Activated naive CD4-positive, alpha-beta T cell treated with anti-CD3 and anti-CD28 coated beads for 36 hours (primary cell): ENCODE measurements at regions of chr19 and their contacts with region 1.

Region 1: DNA sequence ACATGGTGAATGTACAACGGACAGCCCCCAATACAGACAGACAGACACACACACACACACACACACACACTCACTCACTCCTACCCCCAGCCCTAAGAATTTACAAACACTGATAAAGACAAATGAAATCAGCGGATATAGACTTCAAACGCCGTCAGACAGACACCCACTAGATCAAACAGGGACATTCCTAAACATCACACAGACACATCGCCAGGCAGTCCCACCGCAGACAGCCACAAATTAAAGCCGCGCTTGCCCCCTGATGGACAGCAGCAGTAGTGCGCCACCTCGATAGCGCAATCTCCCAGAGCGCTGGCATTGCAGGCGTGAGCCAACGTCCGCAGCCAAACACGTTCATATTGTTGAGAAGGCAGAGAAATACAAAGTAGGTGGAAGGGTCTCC is 24.7 kb upstream of the ADGRE1 start:
- DNase-seq: peak; percentile 98
- H3K4me3 Mint-ChIP-seq: peak overlapping the region; percentile 73
- H3K27ac Mint-ChIP-seq: peak overlapping the region; percentile 80
- H3K4me1 Mint-ChIP-seq: peaks cover 16% of the 10 kb centered on the region
- H3K27me3 Mint-ChIP-seq: no peaks in the 10 kb centered on the region

Region 2: DNA sequence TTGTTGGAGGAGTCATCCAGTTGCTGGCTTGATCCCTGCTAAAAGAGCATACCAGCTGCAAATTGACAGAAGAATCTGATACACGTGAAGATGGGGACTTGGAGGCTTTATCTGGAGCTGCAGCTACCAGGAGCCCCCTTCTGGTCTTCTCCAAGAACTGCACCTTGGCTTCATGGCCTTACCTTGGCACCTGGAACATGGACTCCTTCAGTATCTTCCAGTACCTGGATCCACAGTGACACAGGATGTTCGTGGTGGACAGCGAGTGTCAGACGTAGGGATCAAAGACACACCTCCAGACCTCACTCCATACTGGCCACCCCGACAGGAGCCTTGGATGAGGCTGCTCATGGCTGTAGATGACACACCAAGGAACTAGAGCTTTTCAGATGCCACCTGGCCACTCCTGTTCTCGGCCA is 737.1 kb before region 1 on chr19:
- CTCF ChIA-PET with region 1: no interaction called
- intact Hi-C with region 1: loop called (anchors 2 kb)
- DNase-seq: peak; percentile 76
- H3K4me3 Mint-ChIP-seq: no peak overlapping the region
- H3K27ac Mint-ChIP-seq: no peak overlapping the region
- H3K4me1 Mint-ChIP-seq: no peaks in the 10 kb centered on the region
- H3K27me3 Mint-ChIP-seq: no peaks in the 10 kb centered on the region

Region 3: DNA sequence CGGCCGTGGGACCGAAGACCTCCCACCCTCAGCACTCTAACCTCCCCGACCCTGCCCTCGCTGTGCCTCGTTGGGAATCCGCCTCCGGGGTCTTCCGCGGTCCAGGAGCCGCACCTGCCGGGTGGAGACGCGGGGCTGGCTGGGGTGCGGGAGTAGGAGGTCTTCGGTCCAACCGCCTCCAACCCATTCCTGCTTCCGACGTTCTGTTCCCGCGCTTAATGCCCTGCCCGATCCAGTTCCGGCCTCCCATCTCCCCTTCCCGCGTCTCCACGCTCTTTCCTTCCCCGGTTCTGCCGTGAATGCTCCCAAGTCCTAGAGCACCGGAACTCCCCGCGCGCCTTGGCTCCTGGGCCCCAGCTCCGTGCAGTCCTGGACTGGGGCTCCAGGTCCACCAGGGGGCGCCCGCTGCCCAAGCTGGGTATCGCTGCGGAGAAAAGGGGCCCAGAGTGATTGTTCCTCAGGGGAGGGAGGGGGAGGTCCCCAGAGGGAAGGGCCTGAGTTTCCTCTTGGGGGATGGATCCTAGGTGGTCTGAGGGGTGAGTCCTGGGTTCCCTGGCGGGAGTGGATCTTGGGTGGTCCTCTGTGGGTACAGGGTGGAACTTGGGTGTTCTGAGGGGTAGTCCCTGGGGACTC is 345.9 kb before region 1 on chr19:
- CTCF ChIA-PET with region 1: interaction called, 17 read pairs
- intact Hi-C with region 1: loop called (anchors 1 kb)
- DNase-seq: peak; percentile 96
- H3K4me3 Mint-ChIP-seq: peak overlapping the region; percentile 89
- H3K27ac Mint-ChIP-seq: peak overlapping the region; percentile 80
- H3K4me1 Mint-ChIP-seq: peaks cover 27% of the 10 kb centered on the region
- H3K27me3 Mint-ChIP-seq: no peaks in the 10 kb centered on the region

Region 4: DNA sequence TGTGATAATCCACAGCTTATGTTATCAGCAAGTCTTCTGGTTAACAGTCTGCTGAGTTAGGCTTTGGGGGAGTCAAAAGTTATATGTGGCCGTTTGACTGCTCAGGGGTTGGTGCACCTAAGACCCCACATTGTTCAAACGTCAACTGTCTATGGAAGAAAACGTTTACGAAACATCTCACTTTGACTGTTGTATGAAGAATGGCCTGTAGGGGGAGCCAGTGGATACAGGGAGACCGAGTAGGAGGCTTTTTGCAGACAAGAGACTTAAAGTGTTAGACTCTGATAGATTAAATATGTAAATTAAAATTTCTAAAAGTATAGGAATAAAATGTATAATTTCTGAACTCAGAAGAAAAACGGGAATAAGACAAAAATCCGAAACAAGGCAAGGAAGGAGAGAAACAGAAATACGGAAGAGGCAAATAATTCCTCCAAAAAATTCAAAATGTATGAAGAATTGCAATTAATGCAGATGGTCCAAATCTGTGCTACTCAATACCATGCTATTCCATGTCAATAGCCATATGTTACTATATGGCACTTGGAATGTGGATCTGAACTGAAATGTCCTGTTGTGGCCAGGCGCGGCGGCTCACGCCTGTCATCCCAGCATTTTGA is 230.6 kb before region 1 on chr19:
- CTCF ChIA-PET with region 1: interaction called, 29 read pairs
- intact Hi-C with region 1: loop called (anchors 1 kb)
- DNase-seq: peak; percentile 94
- H3K4me3 Mint-ChIP-seq: no peak overlapping the region
- H3K27ac Mint-ChIP-seq: no peak overlapping the region
- H3K4me1 Mint-ChIP-seq: peaks cover 24% of the 10 kb centered on the region
- H3K27me3 Mint-ChIP-seq: peaks cover 4% of the 10 kb centered on the region

Region 5: DNA sequence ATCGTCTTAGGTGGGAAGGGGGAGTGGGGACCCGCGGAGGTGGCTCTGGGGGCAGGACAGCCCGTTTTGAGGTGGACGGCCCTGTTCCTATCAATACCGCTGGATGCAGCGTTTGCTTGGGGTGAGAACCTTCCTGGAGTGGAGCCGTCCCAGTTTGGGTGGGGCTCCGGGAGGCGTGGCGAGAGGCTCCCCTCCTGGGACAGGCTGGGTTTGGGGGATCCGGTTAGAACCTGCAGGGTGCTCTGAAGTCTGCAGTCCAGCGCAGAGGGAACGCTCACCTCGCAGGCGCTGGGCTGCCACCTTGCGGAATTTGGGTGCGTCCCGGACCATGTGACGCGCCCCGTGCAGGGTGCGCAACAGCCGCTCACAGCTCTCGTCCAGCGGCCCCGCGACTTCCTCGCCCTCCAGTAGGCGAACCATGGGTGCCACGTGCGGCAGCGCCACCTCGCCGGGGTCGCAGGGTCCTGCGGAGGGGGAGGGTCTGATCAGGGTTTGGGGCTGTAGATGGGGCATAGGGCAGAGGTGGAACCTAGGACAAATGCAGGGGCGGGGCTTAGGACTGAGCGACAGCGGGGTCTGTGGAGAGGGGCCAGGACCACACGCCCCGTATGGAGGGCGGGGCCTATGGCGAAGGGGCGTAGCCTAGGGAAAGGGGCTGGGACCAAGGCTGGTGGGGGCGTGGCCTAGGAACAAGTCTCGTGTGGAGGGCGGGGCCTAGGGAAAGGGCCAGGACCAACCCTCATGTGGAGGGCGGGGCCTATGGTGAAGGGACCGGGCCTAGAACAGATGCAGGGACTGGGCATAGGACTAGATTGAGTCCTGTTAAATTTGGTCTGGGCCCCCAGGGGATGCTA is 109.3 kb before region 1 on chr19:
- CTCF ChIA-PET with region 1: interaction called, 8 read pairs
- intact Hi-C with region 1: loop called (anchors 1 kb)
- DNase-seq: peak; percentile 90
- H3K4me3 Mint-ChIP-seq: peak overlapping the region; percentile 65
- H3K27ac Mint-ChIP-seq: peak overlapping the region; percentile 74
- H3K4me1 Mint-ChIP-seq: peaks cover 12% of the 10 kb centered on the region
- H3K27me3 Mint-ChIP-seq: no peaks in the 10 kb centered on the region

Region 6: GRCh38 chr19:6801485-6802086 is 61.1 kb before region 1 on chr19:
- CTCF ChIA-PET with region 1: interaction called, 3 read pairs
- intact Hi-C with region 1: loop called (anchors 1 kb)
- DNase-seq: peak; percentile 90
- H3K4me3 Mint-ChIP-seq: peak overlapping the region; percentile 69
- H3K27ac Mint-ChIP-seq: peak overlapping the region; percentile 89
- H3K4me1 Mint-ChIP-seq: peaks cover 65% of the 10 kb centered on the region
- H3K27me3 Mint-ChIP-seq: no peaks in the 10 kb centered on the region